ENCODE measurements at regions of chr22 and their contacts with region 1.

Region 1: GRCh38 chr22:49852898-49853894 is at the start of gene ZBED4:
- DNase-seq: peak; percentile 93 to 99 (median 98)
- ATAC-seq: peak; percentile 81
- H3K4me3 ChIP-seq: peak within 1 kb of the TSS; percentile 75
- H3K4me3 Mint-ChIP-seq: peak within 1 kb of the TSS; percentile 97
- H3K27ac ChIP-seq: peak within 1 kb of the TSS; percentile 55 to 88
- H3K27ac Mint-ChIP-seq: peak within 1 kb of the TSS; percentile 96
- H3K4me1 ChIP-seq: peaks cover 66% of the 10 kb centered on the region
- H3K4me1 Mint-ChIP-seq: peaks cover 43% of the 10 kb centered on the region
- H3K27me3 ChIP-seq: no peaks in the 10 kb centered on the region
- H3K27me3 Mint-ChIP-seq: peaks cover 3% of the 10 kb centered on the region
- CTCF ChIP-seq: no peak
- total RNA-seq, gene ZBED4: 14.8 to 15.0 TPM

Region 2: GRCh38 chr22:49812838-49813237 is 40.4 kb before region 1 on chr22:
- CTCF ChIA-PET with region 1: no interaction called
- POLR2A ChIA-PET with region 1: interaction called, 5 read pairs
- intact Hi-C with region 1: loop called in 1 of 2 experiments (anchors 10 kb)
- DNase-seq: peak in 1 of 14 experiments; percentile 17
- ATAC-seq: no peak
- H3K4me3 ChIP-seq: no peak overlapping the region
- H3K4me3 Mint-ChIP-seq: peak overlapping the region; percentile 30
- H3K27ac ChIP-seq: no peak overlapping the region
- H3K27ac Mint-ChIP-seq: peak overlapping the region; percentile 44
- H3K4me1 ChIP-seq: peaks cover 83% of the 10 kb centered on the region
- H3K4me1 Mint-ChIP-seq: peaks cover 88% of the 10 kb centered on the region
- H3K27me3 ChIP-seq: no peaks in the 10 kb centered on the region
- H3K27me3 Mint-ChIP-seq: no peaks in the 10 kb centered on the region
- CTCF ChIP-seq: no peak

Region 3: GRCh38 chr22:49867303-49868265 is 14.4 kb after region 1 on chr22:
- CTCF ChIA-PET with region 1: interaction called, 4 read pairs
- POLR2A ChIA-PET with region 1: interaction called, 12 read pairs
- intact Hi-C with region 1: loop called in 1 of 2 experiments (anchors 2 kb)
- DNase-seq: peak in 3 of 14 experiments; percentile 45 to 74 (median 56)
- ATAC-seq: peak; percentile 45
- H3K4me3 ChIP-seq: no peak overlapping the region
- H3K4me3 Mint-ChIP-seq: peak overlapping the region; percentile 38
- H3K27ac ChIP-seq: peak overlapping the region in 1 of 2 donors; percentile 18
- H3K27ac Mint-ChIP-seq: peak overlapping the region; percentile 80
- H3K4me1 ChIP-seq: peaks cover 59% of the 10 kb centered on the region
- H3K4me1 Mint-ChIP-seq: peaks cover 76% of the 10 kb centered on the region
- H3K27me3 ChIP-seq: no peaks in the 10 kb centered on the region
- H3K27me3 Mint-ChIP-seq: no peaks in the 10 kb centered on the region
- CTCF ChIP-seq: no peak

Region 4: GRCh38 chr22:49917974-49918910 is 65.0 kb after region 1 on chr22 and contains the starts of genes ALG12 and CRELD2:
- CTCF ChIA-PET with region 1: no interaction called
- POLR2A ChIA-PET with region 1: interaction called, 10 read pairs
- intact Hi-C with region 1: loop called (anchors 2 to 5 kb)
- DNase-seq: peak; percentile 93 to 98 (median 96)
- ATAC-seq: peak; percentile 99
- H3K4me3 ChIP-seq: peak within 1 kb of the TSS; percentile 89
- H3K4me3 Mint-ChIP-seq: peak within 1 kb of the TSS; percentile 95
- H3K27ac ChIP-seq: peak within 1 kb of the TSS; percentile 58 to 83
- H3K27ac Mint-ChIP-seq: peak within 1 kb of the TSS; percentile 85
- H3K4me1 ChIP-seq: peaks cover 24% of the 10 kb centered on the region
- H3K4me1 Mint-ChIP-seq: peaks cover 21% of the 10 kb centered on the region
- H3K27me3 ChIP-seq: no peaks in the 10 kb centered on the region
- H3K27me3 Mint-ChIP-seq: no peaks in the 10 kb centered on the region
- CTCF ChIP-seq: no peak
- total RNA-seq, gene ALG12: 13.5 to 14.6 TPM
- total RNA-seq, gene CRELD2: 21.2 to 23.3 TPM